HepG2 (cell line): ENCODE measurements at regions of chr1 and their contacts with region 1.

Region 1: DNA sequence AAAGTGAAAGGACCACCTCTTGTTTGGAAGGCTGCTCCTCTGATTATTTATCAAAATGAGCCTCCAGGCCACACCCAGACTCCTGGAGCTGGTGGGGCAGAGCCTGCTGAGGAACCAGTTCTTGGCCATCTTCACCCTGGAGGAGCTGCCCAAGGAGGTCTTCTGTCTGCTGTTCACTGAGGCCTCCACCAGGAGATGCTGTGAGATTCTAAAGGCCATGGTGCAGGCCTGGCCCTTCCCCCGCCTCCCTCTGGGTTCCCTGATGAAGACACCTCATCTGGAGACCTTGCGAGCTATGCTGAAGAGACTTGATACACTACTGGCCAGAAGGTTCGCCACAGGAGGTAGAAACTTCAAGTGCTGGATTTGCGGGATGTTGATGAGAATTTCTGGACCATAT is 61.7 kb upstream of the GJA8 start:
- DNase-seq: no peak
- ATAC-seq: peak; percentile 51; the same call in 2 of the 3 replicates
- H3K4me3 ChIP-seq: no peak overlapping the region
- H3K27ac ChIP-seq: no peak overlapping the region
- H3K4me1 ChIP-seq: no peaks in the 10 kb centered on the region
- H3K27me3 ChIP-seq: 0 out of 5 replicates have a peak, but pooled peaks cover 0 to 1% of the 10 kb centered on the region in 2 experiments
- CTCF ChIP-seq: peak; percentile 51
- EP300 ChIP-seq: no peak
- POLR2A ChIP-seq: no peak
- RAD21 ChIP-seq: peak; percentile 42; the same call in 1 of the 2 replicates

Region 2: GRCh38 chr1:147781056-147781471 is 59.8 kb before region 1 on chr1:
- CTCF ChIA-PET with region 1: no interaction called
- POLR2A ChIA-PET with region 1: no interaction called
- in situ Hi-C with region 1: loop called (anchors 10 kb)
- intact Hi-C with region 1: no loop called
- DNase-seq: no peak
- ATAC-seq: no peak
- H3K4me3 ChIP-seq: no peak overlapping the region
- H3K27ac ChIP-seq: no peak overlapping the region
- H3K4me1 ChIP-seq: no peaks in the 10 kb centered on the region
- H3K27me3 ChIP-seq: no peaks in the 10 kb centered on the region; a peak in 1 of 5 replicates
- CTCF ChIP-seq: no peak
- EP300 ChIP-seq: no peak
- POLR2A ChIP-seq: no peak
- RAD21 ChIP-seq: no peak